ENCODE measurements at regions of chr6 and their contacts with region 1.

Region 1: GRCh38 chr6:72411872-72412708 is 209.8 kb upstream of the KCNQ5 start:
- DNase-seq: peak; percentile 54 to 81
- H3K4me3 ChIP-seq: no peak overlapping the region
- H3K4me3 Mint-ChIP-seq: no peak overlapping the region
- H3K27ac Mint-ChIP-seq: no peak overlapping the region
- H3K4me1 ChIP-seq: peaks cover 4% of the 10 kb centered on the region; the same call in 1 of the 2 replicates
- H3K4me1 Mint-ChIP-seq: no peaks in the 10 kb centered on the region
- H3K27me3 ChIP-seq: no peaks in the 10 kb centered on the region
- H3K27me3 Mint-ChIP-seq: no peaks in the 10 kb centered on the region
- CTCF ChIP-seq: peak; percentile 100

Region 2: DNA sequence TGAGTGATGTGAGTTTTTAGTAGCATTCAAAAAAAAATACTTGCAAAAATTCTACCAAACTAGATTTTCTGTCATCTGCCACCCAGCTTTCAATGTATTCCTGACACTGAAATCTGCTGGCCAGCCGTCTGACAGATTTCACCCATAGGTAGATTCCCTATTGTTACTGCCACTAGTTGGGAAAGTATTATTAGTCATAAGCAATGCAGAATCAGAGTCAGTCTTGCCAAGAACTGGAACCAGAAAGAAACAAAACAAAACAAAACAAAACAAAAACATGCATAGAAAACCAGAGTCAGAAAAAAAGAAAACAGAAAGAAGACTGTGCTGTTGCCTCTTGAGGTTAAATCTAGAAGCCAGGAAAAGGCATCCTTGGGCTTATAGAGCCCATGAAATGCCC is 83.3 kb before region 1 on chr6:
- CTCF ChIA-PET with region 1: interaction called, 11 read pairs
- POLR2A ChIA-PET with region 1: no interaction called
- intact Hi-C with region 1: no loop called
- DNase-seq: no peak
- H3K4me3 ChIP-seq: no peak overlapping the region
- H3K4me3 Mint-ChIP-seq: no peak overlapping the region
- H3K27ac Mint-ChIP-seq: no peak overlapping the region
- H3K4me1 ChIP-seq: no peaks in the 10 kb centered on the region
- H3K4me1 Mint-ChIP-seq: no peaks in the 10 kb centered on the region
- H3K27me3 ChIP-seq: no peaks in the 10 kb centered on the region
- H3K27me3 Mint-ChIP-seq: no peaks in the 10 kb centered on the region
- CTCF ChIP-seq: no peak

Region 3: DNA sequence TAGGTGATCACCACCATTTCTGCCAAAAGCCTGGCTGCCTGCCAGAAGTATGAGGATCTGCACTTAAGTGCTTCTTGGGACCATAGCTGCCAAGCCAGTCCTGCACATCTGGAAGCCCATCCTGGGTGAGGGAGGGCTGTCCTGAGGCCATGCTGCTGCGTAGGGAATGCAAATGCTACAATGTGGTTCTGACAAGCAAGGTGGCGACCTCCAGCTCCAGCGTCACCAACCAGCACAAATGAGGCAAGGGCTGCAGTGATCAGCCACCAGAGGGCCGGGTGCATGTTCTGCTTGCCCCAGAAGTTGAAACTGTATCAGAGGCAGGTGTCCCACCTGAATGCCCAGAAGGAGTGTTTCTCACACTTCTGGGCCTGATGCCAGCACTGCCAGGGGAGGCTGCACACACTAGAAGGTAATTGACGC is 110.6 kb after region 1 on chr6:
- CTCF ChIA-PET with region 1: interaction called, 3 read pairs
- POLR2A ChIA-PET with region 1: no interaction called
- intact Hi-C with region 1: loop called (anchors 2 kb)
- DNase-seq: peak; percentile 55 to 58
- H3K4me3 ChIP-seq: no peak overlapping the region
- H3K4me3 Mint-ChIP-seq: no peak overlapping the region
- H3K27ac Mint-ChIP-seq: no peak overlapping the region
- H3K4me1 ChIP-seq: no peaks in the 10 kb centered on the region
- H3K4me1 Mint-ChIP-seq: no peaks in the 10 kb centered on the region
- H3K27me3 ChIP-seq: no peaks in the 10 kb centered on the region
- H3K27me3 Mint-ChIP-seq: no peaks in the 10 kb centered on the region
- CTCF ChIP-seq: peak; percentile 44 to 65

Region 4: DNA sequence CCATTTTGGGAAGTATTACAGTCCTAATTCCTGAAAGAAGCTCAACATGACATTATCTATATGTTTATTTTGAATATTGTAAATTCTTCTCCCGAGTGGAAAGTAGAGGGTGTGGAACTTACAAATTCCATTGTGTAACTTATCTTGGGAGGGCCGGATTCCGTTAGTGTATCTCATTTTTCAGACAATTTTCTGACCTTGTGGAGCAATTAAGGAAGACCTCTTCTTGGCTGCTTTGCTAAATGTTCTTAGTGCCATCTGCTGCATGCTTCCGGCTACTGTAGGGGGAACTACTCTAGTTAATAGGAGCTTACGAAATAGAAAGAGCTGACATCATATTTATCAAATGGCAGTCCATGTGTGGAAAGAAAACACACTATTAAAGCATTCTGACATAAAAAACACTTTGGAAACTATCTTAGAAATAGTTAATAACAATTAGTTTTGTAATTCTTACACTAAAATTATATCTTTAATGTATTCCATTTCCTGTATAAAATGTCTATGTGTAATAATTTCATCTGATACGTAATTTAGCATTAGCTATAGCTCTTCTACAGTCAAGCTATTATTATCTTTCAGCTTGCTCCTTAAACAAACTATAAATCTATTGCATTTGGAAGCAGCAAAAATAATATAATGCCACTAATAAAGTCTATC is 168.3 kb after region 1 on chr6:
- CTCF ChIA-PET with region 1: interaction called, 70 read pairs
- POLR2A ChIA-PET with region 1: no interaction called
- intact Hi-C with region 1: loop called (anchors 5 kb)
- DNase-seq: peak; percentile 37 to 56
- H3K4me3 ChIP-seq: no peak overlapping the region
- H3K4me3 Mint-ChIP-seq: no peak overlapping the region
- H3K27ac Mint-ChIP-seq: no peak overlapping the region
- H3K4me1 ChIP-seq: no peaks in the 10 kb centered on the region
- H3K4me1 Mint-ChIP-seq: no peaks in the 10 kb centered on the region
- H3K27me3 ChIP-seq: no peaks in the 10 kb centered on the region
- H3K27me3 Mint-ChIP-seq: no peaks in the 10 kb centered on the region
- CTCF ChIP-seq: peak; percentile 51 to 75

Region 5: DNA sequence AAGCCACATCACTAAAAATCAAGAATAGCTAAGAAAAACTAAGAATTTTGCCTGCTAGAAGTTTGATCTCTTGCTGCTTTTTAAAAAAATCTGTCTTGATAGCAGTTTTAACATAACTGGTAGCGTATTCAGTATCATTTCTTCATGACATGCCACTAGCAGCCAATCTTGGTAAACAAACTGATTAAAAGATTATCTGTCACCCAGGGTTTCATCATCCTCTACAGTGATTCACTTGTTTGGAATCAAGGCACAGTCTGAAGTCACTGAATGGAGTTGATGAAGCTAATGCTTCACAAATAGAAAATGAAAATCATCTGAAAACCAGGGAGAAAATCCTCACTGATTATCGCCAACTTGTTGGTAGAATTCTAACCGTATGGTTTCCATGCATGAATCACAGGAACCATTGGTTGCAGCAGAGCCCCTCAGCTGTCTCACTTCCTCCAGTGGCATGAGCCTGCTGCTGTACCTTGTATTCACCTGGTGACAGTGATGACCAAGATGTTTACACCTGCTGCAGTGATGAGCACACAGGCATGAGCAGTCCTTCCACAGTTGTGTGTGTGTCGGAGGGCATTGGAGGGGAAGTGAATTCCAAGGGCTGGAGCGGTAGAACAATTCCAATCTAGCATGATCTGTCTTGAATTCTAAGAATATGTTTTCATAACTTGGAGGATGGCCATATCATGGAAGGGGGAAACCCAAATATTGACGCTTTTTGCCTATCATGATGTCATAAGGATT is 538.2 kb after region 1 on chr6:
- CTCF ChIA-PET with region 1: no interaction called
- POLR2A ChIA-PET with region 1: no interaction called
- intact Hi-C with region 1: no loop called
- DNase-seq: peak in 1 of 2 experiments; percentile 5
- H3K4me3 ChIP-seq: no peak overlapping the region
- H3K4me3 Mint-ChIP-seq: no peak overlapping the region
- H3K27ac Mint-ChIP-seq: no peak overlapping the region
- H3K4me1 ChIP-seq: no peaks in the 10 kb centered on the region
- H3K4me1 Mint-ChIP-seq: peaks cover 12% of the 10 kb centered on the region
- H3K27me3 ChIP-seq: no peaks in the 10 kb centered on the region
- H3K27me3 Mint-ChIP-seq: no peaks in the 10 kb centered on the region
- CTCF ChIP-seq: no peak

Region 6: DNA sequence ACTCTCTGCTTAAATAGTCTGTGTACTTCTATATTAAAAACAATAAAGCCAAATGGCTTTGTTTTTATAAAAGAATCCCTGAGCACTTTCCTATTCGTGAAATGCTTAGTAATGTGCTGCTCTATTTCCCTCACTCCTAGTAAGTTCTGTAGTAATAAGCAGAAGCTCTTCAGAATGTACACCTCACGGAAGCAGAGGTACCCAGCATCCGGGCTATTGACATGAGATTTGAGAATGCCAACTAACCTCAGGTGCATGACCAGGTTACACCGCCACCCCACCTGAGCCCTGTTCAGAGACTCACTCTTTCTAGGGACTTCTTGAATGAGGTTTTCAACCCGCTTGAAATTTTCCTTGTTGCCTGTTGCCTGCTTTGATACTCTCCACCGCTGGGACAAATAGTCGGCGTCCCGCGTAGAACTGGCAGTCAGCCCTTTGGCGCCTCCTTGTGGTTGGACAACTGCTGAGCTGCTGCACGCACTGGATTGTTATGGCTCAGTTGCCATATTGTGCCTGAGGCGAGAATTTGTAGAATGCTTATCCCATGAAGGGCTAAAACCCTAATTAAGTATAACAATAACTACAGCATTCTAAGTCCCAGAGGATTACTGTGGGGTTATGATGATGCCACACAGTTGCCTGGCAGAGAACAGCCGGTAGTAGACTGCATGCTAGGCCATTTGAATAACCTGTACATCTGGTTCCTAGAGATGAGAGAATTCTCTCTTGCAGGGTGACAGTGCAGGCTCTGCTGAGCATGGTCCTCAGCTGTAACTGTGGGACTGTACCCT is 717.8 kb after region 1 on chr6:
- CTCF ChIA-PET with region 1: interaction called, 8 read pairs
- POLR2A ChIA-PET with region 1: no interaction called
- intact Hi-C with region 1: loop called (anchors 1 kb)
- DNase-seq: peak; percentile 73 to 88
- H3K4me3 ChIP-seq: no peak overlapping the region
- H3K4me3 Mint-ChIP-seq: no peak overlapping the region
- H3K27ac Mint-ChIP-seq: no peak overlapping the region
- H3K4me1 ChIP-seq: no peaks in the 10 kb centered on the region
- H3K4me1 Mint-ChIP-seq: no peaks in the 10 kb centered on the region
- H3K27me3 ChIP-seq: no peaks in the 10 kb centered on the region; the same call in 1 of the 2 replicates
- H3K27me3 Mint-ChIP-seq: peaks cover 13% of the 10 kb centered on the region
- CTCF ChIP-seq: peak; percentile 97

Region 7: GRCh38 chr6:73180763-73181619 is 768.9 kb after region 1 on chr6:
- CTCF ChIA-PET with region 1: no interaction called
- POLR2A ChIA-PET with region 1: no interaction called
- intact Hi-C with region 1: loop called (anchors 1 kb)
- DNase-seq: peak in 1 of 2 experiments; percentile 17
- H3K4me3 ChIP-seq: no peak overlapping the region
- H3K4me3 Mint-ChIP-seq: no peak overlapping the region
- H3K27ac Mint-ChIP-seq: no peak overlapping the region
- H3K4me1 ChIP-seq: no peaks in the 10 kb centered on the region
- H3K4me1 Mint-ChIP-seq: no peaks in the 10 kb centered on the region
- H3K27me3 ChIP-seq: no peaks in the 10 kb centered on the region
- H3K27me3 Mint-ChIP-seq: peaks cover 4% of the 10 kb centered on the region
- CTCF ChIP-seq: peak; percentile 58 to 86